ENCODE measurements at regions of chr17 and their contacts with region 1.

Region 1: DNA sequence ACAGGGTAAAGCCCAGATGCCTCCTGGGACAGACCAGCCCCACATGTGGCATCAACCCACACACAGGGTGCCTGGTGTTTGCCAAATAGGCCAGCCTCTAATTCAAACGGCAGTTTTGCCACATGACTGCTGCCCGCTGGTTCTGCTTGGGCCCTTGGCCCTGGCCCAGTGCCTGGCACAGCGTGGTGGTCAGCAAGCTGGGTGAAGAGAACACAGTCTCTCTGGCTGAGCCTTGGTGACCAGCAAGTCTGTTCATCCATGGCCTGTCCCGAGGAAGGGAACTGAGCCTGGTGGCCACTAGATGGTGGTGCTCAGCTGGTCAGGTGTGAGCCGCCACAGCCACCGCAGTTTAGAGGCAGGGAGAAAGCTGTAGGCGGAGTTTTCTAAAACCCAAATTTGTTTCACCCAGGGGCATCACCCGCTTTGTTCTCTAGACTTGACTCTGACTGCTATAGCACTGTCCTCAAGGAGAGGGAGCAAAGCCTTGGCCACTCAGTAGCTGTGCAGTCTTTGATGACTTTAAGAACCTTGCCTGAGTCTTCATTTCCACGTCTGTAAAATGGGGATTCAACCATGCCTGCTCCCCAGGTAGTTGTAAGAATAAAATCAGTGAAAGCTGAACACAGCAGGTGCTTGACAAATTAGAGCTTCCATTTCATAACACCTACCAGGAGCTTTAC is 4.7 kb upstream of the GFAP start:
- DNase-seq: peak; percentile 86
- ATAC-seq: peak; percentile 81

Region 2: GRCh38 chr17:45021607-45022287 is 101.7 kb after region 1 on chr17:
- intact Hi-C with region 1: loop called (anchors 5 kb)
- DNase-seq: peak; percentile 86
- ATAC-seq: peak; percentile 80

Region 3: DNA sequence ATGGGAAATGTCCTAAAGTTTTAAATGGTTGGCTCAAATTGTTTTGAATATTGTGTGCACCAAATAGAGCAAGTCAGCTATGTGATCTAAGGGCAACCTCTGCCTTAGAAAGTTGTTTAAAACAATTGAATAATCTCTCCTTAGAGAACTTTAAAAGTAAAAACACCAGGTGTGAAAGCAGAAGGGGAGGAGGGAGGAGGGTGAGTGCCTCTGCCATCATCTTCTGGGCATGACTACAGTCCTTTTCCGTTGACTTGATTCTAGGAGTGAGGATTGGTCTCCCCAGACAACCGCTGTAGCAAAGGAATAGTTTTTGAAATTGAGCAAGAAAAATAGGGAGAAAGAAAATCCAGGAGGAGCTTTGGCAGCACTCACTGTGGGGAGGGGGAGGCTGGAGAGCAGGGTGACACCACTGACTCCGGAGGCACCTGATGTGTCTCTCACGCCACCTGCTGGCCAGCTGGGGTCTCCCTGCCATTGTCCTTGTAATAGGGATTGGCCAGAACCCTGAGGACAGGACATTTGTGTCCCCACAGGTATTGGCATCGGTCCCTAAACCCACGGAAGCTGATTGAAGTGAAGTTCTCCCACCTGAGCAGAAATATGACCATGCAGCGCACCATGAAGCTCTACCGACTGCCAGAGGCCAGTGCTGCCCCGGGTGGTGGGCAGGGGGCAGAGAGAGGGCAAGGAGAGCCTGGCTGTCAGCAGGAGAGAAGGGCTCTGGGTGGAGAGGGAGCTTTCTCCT is 179.0 kb after region 1 on chr17:
- intact Hi-C with region 1: loop called (anchors 10 kb)
- DNase-seq: peak; percentile 92
- ATAC-seq: peak; percentile 75

Measured in left ventricle myocardium superior (tissue), 1 donor.